SK-N-SH (cell line): ENCODE measurements at regions of chr5 and their contacts with region 1.

Region 1: DNA sequence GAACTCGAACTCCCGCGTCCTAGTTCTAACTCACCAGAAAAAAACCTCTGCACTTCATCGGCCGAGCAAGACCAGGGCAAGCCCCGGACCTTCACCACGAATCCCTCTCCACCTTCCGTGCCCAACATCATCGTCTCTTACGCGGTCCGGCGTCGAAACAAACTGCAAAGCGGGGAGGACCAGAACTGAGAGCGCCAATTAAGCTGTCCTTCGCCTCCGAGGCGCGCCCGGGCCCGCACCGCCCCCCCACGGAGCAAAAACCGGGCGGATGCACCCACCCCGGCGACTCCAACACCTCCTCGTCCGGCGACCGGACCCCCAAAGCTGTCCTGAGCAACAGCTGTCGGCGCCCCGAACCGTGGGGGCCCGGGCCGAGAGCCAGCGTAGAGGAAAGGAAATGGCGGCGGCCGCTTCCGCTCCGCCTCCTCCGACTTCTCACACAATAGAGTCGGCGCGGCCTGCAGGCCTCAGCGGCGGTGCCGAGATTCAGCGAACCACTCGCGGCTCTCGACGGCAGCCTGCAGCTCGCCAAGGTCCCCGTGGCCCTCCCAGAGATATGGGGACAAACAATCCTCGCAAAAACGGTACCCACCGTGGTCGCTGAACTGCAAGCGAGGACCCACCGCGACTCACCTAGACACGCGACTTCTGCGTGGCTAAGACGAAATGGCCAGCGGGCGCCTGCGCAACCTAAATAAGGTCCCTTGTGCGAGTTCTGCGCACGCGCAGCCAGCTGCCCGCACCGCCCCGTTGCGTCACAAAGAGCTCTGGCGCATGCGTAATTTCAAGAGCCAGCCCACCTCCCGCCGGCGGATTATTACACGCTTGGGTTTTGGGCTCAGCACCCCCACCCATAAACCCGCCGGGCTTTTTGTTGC is at the start of gene HNRNPH1:
- DNase-seq: peak; percentile 99
- H3K4me3 ChIP-seq: peak within 1 kb of the TSS; percentile 97 to 98
- H3K27ac ChIP-seq: peak within 1 kb of the TSS; percentile 96 to 97
- H3K4me1 ChIP-seq: peaks cover 19 to 28% of the 10 kb centered on the region in 2 experiments; a peak in 3 of 4 replicates
- H3K27me3 ChIP-seq: no peaks in the 10 kb centered on the region
- CTCF ChIP-seq: no peak
- EP300 ChIP-seq: no peak
- RAD21 ChIP-seq: no peak
- polyA plus RNA-seq, gene HNRNPH1: 192 and 197 TPM in 2 replicates

Region 2: GRCh38 chr5:179559284-179560252 is 63.7 kb before region 1 on chr5:
- CTCF ChIA-PET with region 1: interaction called, 3 read pairs
- POLR2A ChIA-PET with region 1: interaction called, 15 read pairs
- DNase-seq: peak; percentile 95
- H3K4me3 ChIP-seq: peak overlapping the region; percentile 71 to 74
- H3K27ac ChIP-seq: peak overlapping the region; percentile 80 to 96
- H3K4me1 ChIP-seq: peaks cover 0 to 7% of the 10 kb centered on the region in 2 experiments; a peak in 2 of 4 replicates
- H3K27me3 ChIP-seq: no peaks in the 10 kb centered on the region
- CTCF ChIP-seq: no peak
- EP300 ChIP-seq: 0 out of 4 replicates have a peak, but pooled peaks of 1 of the 2 experiments have one; percentile 11
- RAD21 ChIP-seq: no peak

Region 3: GRCh38 chr5:179608131-179608581 is 15.1 kb before region 1 on chr5:
- CTCF ChIA-PET with region 1: interaction called, 11 read pairs
- POLR2A ChIA-PET with region 1: interaction called, 34 read pairs
- DNase-seq: no peak
- H3K4me3 ChIP-seq: no peak overlapping the region
- H3K27ac ChIP-seq: peak overlapping the region; percentile 12 to 20; a peak in 2 of 4 replicates
- H3K4me1 ChIP-seq: peaks cover 0 to 23% of the 10 kb centered on the region in 2 experiments; a peak in 1 of 4 replicates
- H3K27me3 ChIP-seq: no peaks in the 10 kb centered on the region
- CTCF ChIP-seq: no peak
- EP300 ChIP-seq: no peak
- RAD21 ChIP-seq: no peak

Region 4: GRCh38 chr5:179732417-179732917 is 109.2 kb after region 1 on chr5 and contains the start of gene MAML1:
- CTCF ChIA-PET with region 1: interaction called, 4 read pairs
- POLR2A ChIA-PET with region 1: interaction called, 11 read pairs
- DNase-seq: peak; percentile 99
- H3K4me3 ChIP-seq: peak within 1 kb of the TSS; percentile 82 to 89
- H3K27ac ChIP-seq: peak within 1 kb of the TSS; percentile 70 to 88
- H3K4me1 ChIP-seq: peaks cover 8 to 19% of the 10 kb centered on the region in 2 experiments; a peak in 2 of 4 replicates
- H3K27me3 ChIP-seq: no peaks in the 10 kb centered on the region
- CTCF ChIP-seq: no peak
- EP300 ChIP-seq: 0 out of 4 replicates have a peak, but pooled peaks of 1 of the 2 experiments have one; percentile 11
- RAD21 ChIP-seq: no peak
- polyA plus RNA-seq, gene MAML1: 4.4 and 8.1 TPM in 2 replicates